ENCODE measurements at regions of chr10 and their contacts with region 1.

Region 1: DNA sequence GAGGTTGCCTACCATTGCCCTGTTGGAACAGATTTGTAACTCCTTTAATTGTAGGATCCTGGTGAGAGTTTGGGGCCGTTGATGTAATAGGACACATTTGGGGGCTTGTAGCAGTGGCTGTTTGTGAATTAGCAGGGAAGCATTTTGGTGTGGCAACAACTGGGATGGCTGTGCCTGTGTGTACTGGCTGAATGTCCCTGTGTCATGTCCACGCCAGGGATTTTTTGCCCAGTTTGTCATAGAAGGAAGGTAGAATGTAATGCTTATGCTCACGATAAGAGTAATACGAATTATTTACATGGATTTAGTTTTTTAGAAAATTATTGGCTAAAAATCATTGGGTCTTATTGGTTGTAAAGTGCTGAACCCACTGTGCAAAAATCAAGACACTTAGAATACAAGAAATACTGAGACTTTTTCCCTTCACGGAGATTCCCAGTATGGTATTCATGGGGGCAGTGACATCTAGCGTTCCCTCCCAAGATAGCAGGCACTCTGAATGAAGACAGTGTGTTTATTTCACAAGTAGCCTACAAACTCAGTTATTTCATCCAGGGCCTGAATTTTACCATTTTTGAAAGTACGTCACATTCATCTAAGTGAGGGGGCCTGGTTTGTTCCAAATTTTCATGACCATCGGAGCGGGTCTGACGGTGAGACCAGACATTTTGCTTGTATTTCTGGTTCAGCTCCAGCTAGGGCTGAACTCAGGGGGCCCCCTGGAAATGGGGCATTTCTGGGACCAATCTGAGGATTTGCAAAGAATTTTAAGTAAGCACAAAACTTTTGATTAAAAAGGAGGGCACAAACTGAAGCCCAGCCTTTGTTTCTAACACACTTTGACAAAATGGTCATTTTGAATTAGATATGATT is 74.7 kb downstream of the CACNB2 start:
- DNase-seq: peak in 1 of 2 donors; percentile 57
- ATAC-seq: peak; percentile 89

Region 2: GRCh38 chr10:17910125-17910789 is 304.7 kb before region 1 on chr10:
- intact Hi-C with region 1: loop called in 1 of 2 experiments (anchors 5 kb)
- DNase-seq: peak; percentile 38 to 58
- ATAC-seq: peak; percentile 72

Measured in left colon (tissue), 2 donors.